ENCODE measurements at regions of chr12 and their contacts with region 1.

Region 1: DNA sequence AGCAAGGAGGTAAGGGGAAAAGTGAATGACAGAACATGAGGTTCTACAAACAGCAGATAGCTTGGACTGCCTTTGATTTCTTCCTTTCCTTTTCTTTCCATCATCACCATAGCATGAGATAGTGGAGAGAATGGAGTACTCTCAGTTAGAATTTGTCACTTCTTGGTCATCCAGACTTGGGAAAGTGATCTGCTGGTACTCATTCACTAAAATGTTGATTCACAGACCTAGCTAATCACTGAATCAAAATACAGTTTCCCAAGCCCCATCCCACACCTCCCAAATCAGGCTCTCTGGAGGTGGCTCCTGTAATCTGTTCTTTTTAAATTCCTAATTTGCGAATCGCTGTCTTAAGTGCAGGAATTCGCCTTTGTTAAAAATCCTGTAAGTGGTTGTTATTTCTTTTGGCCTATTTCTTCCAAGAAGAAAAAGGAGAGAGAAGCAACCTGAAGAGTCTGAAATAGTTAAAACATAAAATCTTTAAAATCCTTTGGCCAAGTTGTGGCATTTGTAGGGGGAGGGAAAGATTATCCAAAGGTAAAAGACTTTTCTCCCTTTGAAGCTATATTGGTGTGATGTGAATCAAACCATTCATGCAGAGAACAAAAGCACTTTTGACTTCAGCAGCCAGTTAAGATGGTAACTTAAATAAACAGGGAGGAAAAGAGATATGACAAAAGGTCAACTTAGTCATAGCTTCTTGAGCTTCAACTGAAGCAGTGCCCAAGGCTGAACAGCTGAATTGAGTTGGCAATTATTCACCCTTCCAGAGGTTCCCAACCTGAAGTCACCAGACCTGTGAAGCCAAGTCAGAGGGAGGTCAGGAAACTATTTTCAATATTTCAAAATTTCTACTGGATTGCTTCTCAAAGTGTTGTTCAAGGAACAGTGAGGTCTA is 255.1 kb upstream of the KRR1 start:
- DNase-seq: peak; percentile 63
- H3K4me3 Mint-ChIP-seq: no peak overlapping the region
- H3K27ac Mint-ChIP-seq: peak overlapping the region; percentile 73
- H3K4me1 Mint-ChIP-seq: peaks cover 60% of the 10 kb centered on the region
- H3K27me3 Mint-ChIP-seq: no peaks in the 10 kb centered on the region
- CTCF ChIP-seq: no peak

Region 2: DNA sequence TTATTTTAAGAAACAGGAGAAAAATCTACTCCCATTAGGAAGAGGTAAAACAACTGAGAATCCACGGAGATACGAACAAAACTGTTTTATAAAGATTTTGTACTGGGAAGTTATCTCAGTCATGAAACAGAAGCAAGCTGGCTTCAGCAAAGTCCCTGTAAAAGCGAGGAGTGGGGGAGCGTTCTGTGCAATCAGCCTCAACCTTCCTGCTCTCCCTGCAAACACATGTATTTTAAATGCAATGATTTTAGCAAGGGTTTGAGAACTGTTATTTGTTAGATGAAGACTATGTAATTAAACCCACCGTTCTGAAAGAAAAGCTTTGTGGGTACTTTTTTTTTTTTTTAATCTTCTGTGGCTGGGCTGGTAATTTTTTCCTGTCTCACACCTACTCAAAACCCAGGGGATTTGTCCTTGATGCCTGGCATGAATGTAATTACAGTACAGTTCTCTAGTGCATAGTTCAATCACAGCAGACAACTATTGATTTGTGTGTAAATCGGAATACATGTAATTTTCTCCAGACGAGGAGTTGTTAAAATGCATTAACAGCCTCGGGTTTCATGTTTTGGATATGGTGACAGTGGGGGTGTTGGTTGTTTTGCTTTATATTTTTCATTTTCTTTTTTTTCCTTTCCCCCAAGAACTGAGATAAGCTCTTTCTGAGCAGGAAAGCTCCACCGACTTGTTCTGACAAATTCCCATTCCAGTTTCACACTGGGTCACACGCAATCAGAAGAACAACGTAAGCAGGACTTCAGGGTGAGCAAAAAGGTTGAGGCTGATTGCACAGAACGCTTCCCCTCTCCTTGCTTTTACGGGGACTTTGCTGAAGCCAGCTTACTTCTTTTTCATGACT is 111.5 kb after region 1 on chr12:
- CTCF ChIA-PET with region 1: no interaction called
- intact Hi-C with region 1: loop called (anchors 5 kb)
- DNase-seq: no peak
- H3K4me3 Mint-ChIP-seq: peak overlapping the region; percentile 52
- H3K27ac Mint-ChIP-seq: peak overlapping the region; percentile 83
- H3K4me1 Mint-ChIP-seq: peaks cover 50% of the 10 kb centered on the region
- H3K27me3 Mint-ChIP-seq: no peaks in the 10 kb centered on the region
- CTCF ChIP-seq: no peak

Region 3: GRCh38 chr12:76201758-76202157 is 435.2 kb after region 1 on chr12:
- CTCF ChIA-PET with region 1: no interaction called
- intact Hi-C with region 1: no loop called
- DNase-seq: no peak
- H3K4me3 Mint-ChIP-seq: no peak overlapping the region
- H3K27ac Mint-ChIP-seq: no peak overlapping the region
- H3K4me1 Mint-ChIP-seq: peaks cover 7% of the 10 kb centered on the region
- H3K27me3 Mint-ChIP-seq: no peaks in the 10 kb centered on the region
- CTCF ChIP-seq: no peak